BJ (cell line): ENCODE measurements at regions of chr22 and their contacts with region 1.

Region 1: GRCh38 chr22:31272522-31273446 is 19.5 kb downstream of the PIK3IP1 start:
- DNase-seq: no peak
- H3K4me3 ChIP-seq: no peak overlapping the region
- H3K27me3 ChIP-seq: no peaks in the 10 kb centered on the region
- CTCF ChIP-seq: peak; percentile 77

Region 2: DNA sequence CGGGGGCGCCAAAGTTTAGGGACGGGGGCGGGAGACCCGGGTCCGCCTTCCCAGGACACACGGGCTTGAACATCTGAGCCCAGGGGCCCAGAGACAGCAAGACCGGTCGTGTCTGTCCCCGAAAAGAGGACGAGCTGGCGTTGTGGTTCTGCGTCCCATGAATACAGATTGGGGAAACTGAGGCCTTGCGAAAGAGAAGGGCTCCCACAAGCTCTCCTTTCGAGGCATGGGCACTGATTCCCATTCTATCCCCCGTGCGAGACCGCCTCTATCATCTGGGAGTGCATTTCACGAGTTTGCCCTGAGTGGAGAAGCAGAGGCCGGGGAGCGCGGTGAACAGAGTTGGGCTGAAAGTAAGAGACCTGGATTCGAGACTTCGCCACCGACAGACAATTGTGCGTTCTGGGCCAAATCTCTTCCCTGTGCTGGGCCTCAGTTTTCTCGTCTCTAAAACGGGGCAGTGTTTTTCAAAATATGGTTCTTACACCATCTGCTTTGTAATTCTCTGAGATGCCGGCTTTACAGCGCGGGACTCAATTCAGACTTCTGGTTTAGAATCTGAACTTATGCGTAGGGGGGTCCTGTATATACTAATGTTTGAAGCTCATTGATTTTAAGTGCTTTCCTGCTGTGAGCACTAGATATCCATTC is 112.3 kb before region 1 on chr22:
- CTCF ChIA-PET with region 1: interaction called, 12 read pairs
- POLR2A ChIA-PET with region 1: no interaction called
- DNase-seq: no peak
- H3K4me3 ChIP-seq: peak overlapping the region; percentile 62
- H3K27me3 ChIP-seq: no peaks in the 10 kb centered on the region
- CTCF ChIP-seq: no peak

Region 3: GRCh38 chr22:31218565-31219262 is 54.1 kb before region 1 on chr22:
- CTCF ChIA-PET with region 1: interaction called, 78 read pairs
- POLR2A ChIA-PET with region 1: no interaction called
- DNase-seq: no peak
- H3K4me3 ChIP-seq: no peak overlapping the region
- H3K27me3 ChIP-seq: no peaks in the 10 kb centered on the region
- CTCF ChIP-seq: no peak

Region 4: DNA sequence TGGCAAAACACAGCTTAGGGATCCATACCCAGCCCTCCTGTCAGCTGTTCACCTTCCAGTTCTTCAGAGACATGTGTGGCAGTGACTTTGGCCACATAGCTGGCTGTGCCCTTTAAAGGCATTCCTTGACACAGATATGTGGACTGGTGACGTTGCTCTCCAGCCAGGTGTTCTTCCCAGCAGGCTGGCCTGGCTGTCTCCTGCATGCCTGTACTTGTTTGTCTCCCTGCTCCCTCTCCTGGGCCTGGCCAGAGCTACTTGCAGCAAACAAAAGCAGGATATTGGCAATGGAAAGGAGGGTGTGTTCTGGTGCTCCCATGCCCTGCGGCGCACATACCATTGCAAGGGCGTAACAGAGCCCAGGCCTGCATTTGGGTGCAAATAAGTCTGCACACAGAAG is 18.8 kb before region 1 on chr22:
- CTCF ChIA-PET with region 1: interaction called, 70 read pairs
- POLR2A ChIA-PET with region 1: no interaction called
- DNase-seq: no peak
- H3K4me3 ChIP-seq: no peak overlapping the region
- H3K27me3 ChIP-seq: no peaks in the 10 kb centered on the region
- CTCF ChIP-seq: no peak

Region 5: GRCh38 chr22:31290494-31291471 is 18.0 kb after region 1 on chr22:
- CTCF ChIA-PET with region 1: interaction called, 64 read pairs
- POLR2A ChIA-PET with region 1: no interaction called
- DNase-seq: peak; percentile 49
- H3K4me3 ChIP-seq: peak overlapping the region; percentile 37
- H3K27me3 ChIP-seq: no peaks in the 10 kb centered on the region
- CTCF ChIP-seq: no peak

Region 6: GRCh38 chr22:31302537-31302936 is 29.8 kb after region 1 on chr22:
- CTCF ChIA-PET with region 1: no interaction called
- POLR2A ChIA-PET with region 1: no interaction called
- DNase-seq: no peak
- H3K4me3 ChIP-seq: no peak overlapping the region
- H3K27me3 ChIP-seq: peaks cover 2% of the 10 kb centered on the region; the same call in 1 of the 2 replicates
- CTCF ChIP-seq: no peak

Region 7: DNA sequence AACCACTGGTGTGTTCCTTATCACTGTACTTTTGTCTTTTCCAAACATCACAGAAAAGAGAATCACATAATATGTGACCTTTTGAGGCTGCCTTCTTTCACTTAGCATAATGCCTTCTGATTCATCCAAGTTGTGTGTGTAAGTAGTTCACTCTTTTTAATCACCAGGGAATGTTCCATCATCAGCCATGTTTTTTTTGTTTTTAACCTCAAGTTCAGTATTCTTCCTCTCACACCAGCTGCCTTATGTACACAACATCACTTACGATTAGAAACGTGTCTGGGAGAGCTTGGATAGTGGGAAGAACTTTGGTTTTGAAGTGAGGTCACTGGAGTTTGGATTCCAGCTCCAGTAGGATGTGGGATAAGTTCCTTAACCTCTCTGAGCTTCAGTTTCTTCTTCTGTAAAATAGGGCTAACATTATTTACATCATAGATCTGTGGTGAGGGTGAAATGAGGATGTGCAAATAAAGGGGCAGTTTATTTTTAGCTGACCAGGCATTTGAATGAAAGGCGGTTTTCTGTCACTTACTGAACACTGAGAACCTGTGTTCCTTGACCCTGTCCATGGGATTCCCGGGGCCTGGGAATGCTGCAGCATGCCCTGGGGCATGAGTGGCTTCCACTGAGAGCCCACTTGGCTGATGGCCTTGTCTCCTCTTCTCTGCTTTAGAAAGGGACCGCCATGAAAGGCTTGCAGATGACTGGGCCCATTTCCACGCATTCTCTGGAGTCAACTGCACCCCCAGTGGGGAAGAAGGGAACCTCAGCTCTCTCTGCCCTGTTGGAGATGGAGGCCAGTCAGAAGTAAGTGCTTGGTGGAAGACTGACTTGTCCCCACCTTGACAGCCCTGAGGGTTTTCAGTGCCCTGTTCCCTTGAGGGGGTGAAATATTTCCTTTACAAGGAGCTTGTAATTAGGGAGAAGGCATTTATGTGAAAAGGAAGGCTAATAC is 573.7 kb after region 1 on chr22:
- CTCF ChIA-PET with region 1: no interaction called
- POLR2A ChIA-PET with region 1: no interaction called
- DNase-seq: no peak
- H3K4me3 ChIP-seq: no peak overlapping the region
- H3K27me3 ChIP-seq: no peaks in the 10 kb centered on the region
- CTCF ChIP-seq: no peak